ENCODE measurements at regions of chr9 and their contacts with region 1.

Region 1: GRCh38 chr9:37191403-37192089 is 71.2 kb downstream of the ZCCHC7 start:
- DNase-seq: no peak
- H3K4me3 ChIP-seq: no peak overlapping the region
- CTCF ChIP-seq: no peak

Region 2: GRCh38 chr9:37229882-37230487 is 38.4 kb after region 1 on chr9:
- in situ Hi-C with region 1: loop called (anchors 5 kb)
- DNase-seq: no peak
- H3K4me3 ChIP-seq: no peak overlapping the region
- CTCF ChIP-seq: no peak

Measured in astrocyte of the cerebellum (primary cell).